GM12878 (cell line): ENCODE measurements at regions of chr1 and their contacts with region 1.

Region 1: DNA sequence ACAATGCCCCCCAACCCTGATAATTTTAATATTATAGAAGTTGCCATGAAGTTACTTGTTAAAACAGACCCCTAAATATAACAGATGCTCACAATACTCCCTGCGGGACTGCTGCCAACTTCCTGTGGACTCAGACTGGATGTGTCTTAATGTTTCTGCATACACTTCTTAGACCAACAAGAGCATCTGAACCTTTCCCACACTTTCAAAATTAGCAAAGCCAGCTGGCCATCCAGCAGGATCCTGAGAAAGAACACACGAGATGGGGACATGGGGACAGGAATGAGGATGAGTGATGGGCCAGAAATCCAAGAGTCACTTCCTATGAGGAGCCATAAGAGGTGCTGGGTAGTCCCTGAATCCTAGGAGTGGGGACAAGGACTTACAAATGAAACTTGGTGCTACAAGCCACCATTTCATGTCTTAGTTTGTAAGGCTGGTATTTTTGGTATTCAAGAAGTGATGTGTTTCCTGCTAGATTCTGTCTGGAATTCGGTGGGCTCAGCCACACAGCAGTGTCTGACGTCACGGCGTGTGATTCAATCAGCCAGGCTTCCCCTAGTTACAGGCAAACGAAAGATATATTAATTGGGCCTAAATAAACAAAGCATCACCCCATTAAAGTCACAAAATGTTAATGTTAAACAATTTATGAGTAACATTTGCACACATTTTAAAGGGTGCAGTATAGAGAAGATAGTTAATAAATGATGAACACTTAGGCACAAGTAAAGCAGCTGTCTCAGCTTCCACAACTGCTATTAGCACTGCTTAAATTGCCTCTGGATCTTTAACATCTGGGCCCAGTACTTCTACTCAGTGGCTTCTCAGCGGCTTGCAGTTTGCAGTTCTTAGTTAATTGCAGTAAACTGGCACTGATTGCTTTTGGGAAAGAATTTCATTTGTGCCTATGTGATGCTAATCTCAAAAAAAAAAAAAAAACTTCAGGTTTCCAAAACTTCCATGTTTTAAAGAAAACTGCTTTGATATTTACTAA is 41.2 kb upstream of the RGS8 start:
- DNase-seq: no peak
- ATAC-seq: no peak
- H3K4me3 ChIP-seq: no peak overlapping the region
- H3K27ac ChIP-seq: no peak overlapping the region
- H3K4me1 ChIP-seq: no peaks in the 10 kb centered on the region
- H3K27me3 ChIP-seq: no peaks in the 10 kb centered on the region
- CTCF ChIP-seq: no peak
- EP300 ChIP-seq: no peak
- POLR2A ChIP-seq: no peak
- RAD21 ChIP-seq: no peak

Region 2: DNA sequence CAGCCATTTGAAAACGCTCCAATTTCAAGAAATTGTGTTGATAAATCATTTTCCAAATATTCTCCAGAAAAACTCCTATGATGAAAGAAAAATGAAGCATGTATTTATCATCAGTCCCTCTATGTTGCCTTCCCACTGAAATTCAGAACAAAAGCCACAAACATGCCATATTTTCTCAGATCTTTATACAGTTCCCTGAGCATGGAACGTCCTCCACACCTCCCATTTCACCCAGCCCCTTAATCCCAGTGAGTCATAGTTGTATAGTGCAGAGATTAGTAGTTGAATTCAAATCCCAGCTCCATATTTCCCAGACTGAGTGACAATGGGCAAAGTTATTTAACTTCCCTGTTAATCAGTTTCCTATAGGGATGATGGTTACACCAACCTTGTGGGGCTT is 43.4 kb after region 1 on chr1:
- CTCF ChIA-PET with region 1: interaction called, 4 read pairs
- POLR2A ChIA-PET with region 1: no interaction called
- RAD21 ChIA-PET with region 1: no interaction called
- SMC1A ChIA-PET with region 1: no interaction called
- in situ Hi-C with region 1: no loop called
- intact Hi-C with region 1: loop called (anchors 5 kb)
- DNase-seq: no peak
- ATAC-seq: no peak
- H3K4me3 ChIP-seq: no peak overlapping the region
- H3K27ac ChIP-seq: no peak overlapping the region
- H3K4me1 ChIP-seq: no peaks in the 10 kb centered on the region
- H3K27me3 ChIP-seq: no peaks in the 10 kb centered on the region
- CTCF ChIP-seq: no peak
- EP300 ChIP-seq: no peak
- POLR2A ChIP-seq: no peak
- RAD21 ChIP-seq: no peak